ENCODE measurements at regions of chr2 and their contacts with region 1.

Region 1: DNA sequence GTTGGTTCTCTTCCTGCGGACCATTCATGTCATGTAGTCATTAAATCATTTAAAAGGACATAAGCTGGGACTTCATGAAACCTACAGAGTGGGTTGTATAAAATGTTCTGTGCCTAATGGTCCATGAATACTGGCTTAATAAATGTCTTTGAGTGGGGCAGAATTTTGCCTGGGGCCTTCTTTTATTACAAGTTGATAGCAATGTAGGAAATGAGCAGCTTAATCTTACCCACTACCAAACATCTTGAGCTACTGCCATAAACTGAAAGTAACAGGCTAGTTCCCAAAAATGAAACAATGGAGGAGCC is 130.9 kb downstream of the TMEM17 start:
- DNase-seq: no peak
- H3K4me3 Mint-ChIP-seq: no peak overlapping the region
- H3K27ac Mint-ChIP-seq: no peak overlapping the region
- H3K4me1 Mint-ChIP-seq: peaks cover under 1% of the 10 kb centered on the region
- H3K27me3 Mint-ChIP-seq: no peaks in the 10 kb centered on the region
- CTCF ChIP-seq: no peak

Region 2: GRCh38 chr2:61538200-61538919 is 836.7 kb before region 1 on chr2 and contains the start of gene XPO1:
- CTCF ChIA-PET with region 1: no interaction called
- intact Hi-C with region 1: no loop called
- DNase-seq: peak; percentile 99
- H3K4me3 Mint-ChIP-seq: peak within 1 kb of the TSS; percentile 86
- H3K27ac Mint-ChIP-seq: peak within 1 kb of the TSS; percentile 98
- H3K4me1 Mint-ChIP-seq: peaks cover 8% of the 10 kb centered on the region
- H3K27me3 Mint-ChIP-seq: no peaks in the 10 kb centered on the region
- CTCF ChIP-seq: no peak
- total RNA-seq, gene XPO1: 214 and 223 TPM in 2 replicates

Region 3: GRCh38 chr2:61905372-61906185 is 469.5 kb before region 1 on chr2 and contains the start of gene COMMD1:
- CTCF ChIA-PET with region 1: no interaction called
- intact Hi-C with region 1: no loop called
- DNase-seq: peak; percentile 79
- H3K4me3 Mint-ChIP-seq: peak within 1 kb of the TSS; percentile 97
- H3K27ac Mint-ChIP-seq: peak within 1 kb of the TSS; percentile 68
- H3K4me1 Mint-ChIP-seq: no peaks in the 10 kb centered on the region
- H3K27me3 Mint-ChIP-seq: no peaks in the 10 kb centered on the region
- CTCF ChIP-seq: no peak
- total RNA-seq, gene COMMD1: 19.4 and 26.0 TPM in 2 replicates

Region 4: GRCh38 chr2:62099523-62100175 is 275.4 kb before region 1 on chr2:
- CTCF ChIA-PET with region 1: interaction called, 13 read pairs
- intact Hi-C with region 1: no loop called
- DNase-seq: no peak
- H3K4me3 Mint-ChIP-seq: no peak overlapping the region
- H3K27ac Mint-ChIP-seq: no peak overlapping the region
- H3K4me1 Mint-ChIP-seq: no peaks in the 10 kb centered on the region
- H3K27me3 Mint-ChIP-seq: no peaks in the 10 kb centered on the region
- CTCF ChIP-seq: no peak

Region 5: GRCh38 chr2:62118160-62118559 is 256.9 kb before region 1 on chr2:
- CTCF ChIA-PET with region 1: no interaction called
- intact Hi-C with region 1: no loop called
- DNase-seq: no peak
- H3K4me3 Mint-ChIP-seq: no peak overlapping the region
- H3K27ac Mint-ChIP-seq: no peak overlapping the region
- H3K4me1 Mint-ChIP-seq: no peaks in the 10 kb centered on the region
- H3K27me3 Mint-ChIP-seq: no peaks in the 10 kb centered on the region
- CTCF ChIP-seq: no peak

Region 6: DNA sequence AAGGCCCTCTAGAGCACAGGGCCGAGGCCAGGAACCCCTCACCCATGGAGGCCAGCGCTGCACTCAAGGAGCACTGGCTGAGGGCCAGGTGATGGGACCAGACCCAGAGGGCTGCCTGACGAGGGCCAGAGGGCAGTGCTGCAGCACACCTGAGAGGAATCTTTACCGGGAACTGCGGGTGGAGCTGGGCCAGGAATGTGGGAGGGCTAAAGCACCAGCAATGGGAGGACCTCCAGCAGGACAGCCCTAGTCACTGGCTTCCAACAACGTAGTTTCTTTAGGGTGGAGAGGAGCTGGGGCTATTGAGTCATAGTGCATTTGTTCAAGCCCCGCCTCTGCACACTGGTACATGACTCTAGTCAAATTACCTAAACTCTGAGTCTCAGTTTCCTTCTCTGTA is 12.5 kb before region 1 on chr2:
- CTCF ChIA-PET with region 1: no interaction called
- intact Hi-C with region 1: no loop called
- DNase-seq: peak; percentile 24
- H3K4me3 Mint-ChIP-seq: no peak overlapping the region
- H3K27ac Mint-ChIP-seq: no peak overlapping the region
- H3K4me1 Mint-ChIP-seq: no peaks in the 10 kb centered on the region
- H3K27me3 Mint-ChIP-seq: no peaks in the 10 kb centered on the region
- CTCF ChIP-seq: no peak

Measured in Calu3 (cell line).